ENCODE measurements at regions of chr4 and their contacts with region 1.

Region 1: GRCh38 chr4:99894161-99894997 is at the start of gene LAMTOR3:
- DNase-seq: peak; percentile 96
- H3K4me3 ChIP-seq: peak within 1 kb of the TSS; percentile 73 to 89 (median 84)
- H3K27ac ChIP-seq: peak within 1 kb of the TSS; percentile 86 to 89 (median 88)
- H3K4me1 ChIP-seq: peaks cover 0 to 47% (median 25%) of the 10 kb centered on the region in 4 donors
- H3K27me3 ChIP-seq: no peaks in the 10 kb centered on the region
- CTCF ChIP-seq: no peak
- EP300 ChIP-seq: no peak
- POLR2A ChIP-seq: peak in 1 of 2 donors; percentile 6
- total RNA-seq, gene LAMTOR3: 36.6 to 77.2 (median 62.2) TPM

Region 2: GRCh38 chr4:99074816-99075215 is 819.6 kb before region 1 on chr4:
- intact Hi-C with region 1: no loop called
- DNase-seq: no peak
- H3K4me3 ChIP-seq: no peak overlapping the region
- H3K27ac ChIP-seq: no peak overlapping the region
- H3K4me1 ChIP-seq: peaks cover 0 to 21% (median 10%) of the 10 kb centered on the region in 4 donors
- H3K27me3 ChIP-seq: no peaks in the 10 kb centered on the region
- CTCF ChIP-seq: no peak
- EP300 ChIP-seq: no peak
- POLR2A ChIP-seq: no peak

Region 3: DNA sequence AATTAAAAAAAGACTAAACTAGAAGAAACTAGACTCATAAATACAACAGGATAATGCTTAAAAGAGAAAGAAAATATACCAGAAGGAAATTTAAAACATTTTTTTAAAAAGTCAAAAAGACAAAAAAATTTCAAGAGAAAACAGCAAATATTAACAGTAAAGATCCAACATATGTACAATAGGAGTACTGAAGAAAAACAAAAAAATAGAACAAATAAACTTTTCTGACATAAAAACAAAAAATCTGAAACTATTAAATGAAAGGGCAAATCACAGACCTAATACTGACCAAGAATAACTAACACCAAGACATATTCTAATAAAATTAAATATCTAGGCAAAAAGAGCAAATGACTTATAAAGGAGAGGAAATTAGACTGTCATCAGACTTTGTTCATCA is 40.5 kb after region 1 on chr4:
- intact Hi-C with region 1: loop called (anchors 5 kb)
- DNase-seq: no peak
- H3K4me3 ChIP-seq: no peak overlapping the region
- H3K27ac ChIP-seq: no peak overlapping the region
- H3K4me1 ChIP-seq: no peaks in the 10 kb centered on the region
- H3K27me3 ChIP-seq: no peaks in the 10 kb centered on the region
- CTCF ChIP-seq: no peak
- EP300 ChIP-seq: no peak
- POLR2A ChIP-seq: no peak